ENCODE measurements at regions of chr18 and their contacts with region 1.

Region 1: DNA sequence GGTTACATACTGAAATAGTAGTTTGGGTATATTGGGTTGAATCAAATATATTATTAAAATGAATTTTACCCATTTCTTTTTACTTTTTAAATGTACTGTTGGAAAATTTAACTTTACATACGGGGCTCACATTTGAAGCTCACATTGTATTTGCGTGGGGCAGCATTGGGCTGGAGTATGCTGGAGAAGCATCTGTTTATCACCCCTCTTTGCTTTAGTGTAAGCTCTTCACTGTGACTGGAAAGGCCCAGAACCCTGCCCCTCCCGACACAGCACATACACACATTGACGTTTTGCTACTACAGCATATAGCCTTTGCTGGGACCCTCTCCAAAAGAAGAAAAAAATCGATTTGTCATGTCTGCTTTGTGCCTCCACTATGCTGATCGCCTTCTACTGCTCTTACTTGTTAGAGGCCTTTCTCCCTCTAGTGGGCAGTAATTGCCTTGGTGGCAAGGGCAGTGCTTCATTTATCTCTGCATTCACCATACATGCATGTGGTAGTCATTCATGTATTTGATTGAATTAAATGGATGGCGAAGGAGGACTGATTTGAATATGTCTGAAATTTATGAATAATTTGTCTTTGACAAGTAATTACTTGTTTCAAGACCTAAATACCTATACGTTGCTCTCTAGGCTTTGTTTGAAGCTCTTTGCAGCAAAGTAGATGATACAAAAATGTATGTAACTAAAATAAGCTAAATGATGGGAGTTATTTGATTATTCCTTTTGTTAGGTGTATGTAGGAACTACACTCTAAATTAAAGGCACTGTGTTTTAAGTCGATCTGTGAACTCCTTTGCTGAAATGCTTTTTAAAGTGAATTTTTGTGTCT is 37.4 kb downstream of the VAPA start:
- DNase-seq: peak; percentile 20 to 79 (median 45)
- ATAC-seq: peak; percentile 66
- H3K4me3 ChIP-seq: no peak overlapping the region
- H3K27ac ChIP-seq: peak overlapping the region; percentile 81
- H3K4me1 ChIP-seq: peaks cover 22 to 54% of the 10 kb centered on the region in 2 experiments; a peak in 4 of 5 replicates
- H3K27me3 ChIP-seq: no peaks in the 10 kb centered on the region
- CTCF ChIP-seq: peak; percentile 68 to 85 (median 80)
- EP300 ChIP-seq: no peak; the same call in 1 of the 2 replicates
- POLR2A ChIP-seq: no peak
- RAD21 ChIP-seq: peak; percentile 55 to 83

Region 2: GRCh38 chr18:9575558-9575957 is 375.7 kb before region 1 on chr18:
- CTCF ChIA-PET with region 1: no interaction called
- POLR2A ChIA-PET with region 1: interaction called, 4 read pairs
- in situ Hi-C with region 1: no loop called
- intact Hi-C with region 1: loop called (anchors 10 kb)
- DNase-seq: peak; percentile 70 to 98 (median 76)
- ATAC-seq: peak; percentile 98
- H3K4me3 ChIP-seq: no peak overlapping the region
- H3K27ac ChIP-seq: peak overlapping the region; percentile 16; the same call in 1 of the 3 replicates
- H3K4me1 ChIP-seq: peaks cover 0 to 6% of the 10 kb centered on the region in 2 experiments; a peak in 2 of 5 replicates
- H3K27me3 ChIP-seq: no peaks in the 10 kb centered on the region
- CTCF ChIP-seq: peak; percentile 87 to 99 (median 96)
- EP300 ChIP-seq: peak; percentile 48; the same call in 1 of the 2 replicates
- POLR2A ChIP-seq: no peak
- RAD21 ChIP-seq: peak; percentile 94 to 99

Region 3: GRCh38 chr18:9701609-9702349 is 249.5 kb before region 1 on chr18:
- CTCF ChIA-PET with region 1: no interaction called
- POLR2A ChIA-PET with region 1: interaction called, 4 read pairs
- in situ Hi-C with region 1: no loop called
- intact Hi-C with region 1: loop called (anchors 5 kb)
- DNase-seq: peak in 1 of 4 experiments; percentile 43
- ATAC-seq: no peak
- H3K4me3 ChIP-seq: no peak overlapping the region
- H3K27ac ChIP-seq: no peak overlapping the region
- H3K4me1 ChIP-seq: peaks cover 18 to 36% of the 10 kb centered on the region in 2 experiments; a peak in 4 of 5 replicates
- H3K27me3 ChIP-seq: no peaks in the 10 kb centered on the region
- CTCF ChIP-seq: no peak
- EP300 ChIP-seq: no peak
- POLR2A ChIP-seq: no peak
- RAD21 ChIP-seq: no peak

Region 4: DNA sequence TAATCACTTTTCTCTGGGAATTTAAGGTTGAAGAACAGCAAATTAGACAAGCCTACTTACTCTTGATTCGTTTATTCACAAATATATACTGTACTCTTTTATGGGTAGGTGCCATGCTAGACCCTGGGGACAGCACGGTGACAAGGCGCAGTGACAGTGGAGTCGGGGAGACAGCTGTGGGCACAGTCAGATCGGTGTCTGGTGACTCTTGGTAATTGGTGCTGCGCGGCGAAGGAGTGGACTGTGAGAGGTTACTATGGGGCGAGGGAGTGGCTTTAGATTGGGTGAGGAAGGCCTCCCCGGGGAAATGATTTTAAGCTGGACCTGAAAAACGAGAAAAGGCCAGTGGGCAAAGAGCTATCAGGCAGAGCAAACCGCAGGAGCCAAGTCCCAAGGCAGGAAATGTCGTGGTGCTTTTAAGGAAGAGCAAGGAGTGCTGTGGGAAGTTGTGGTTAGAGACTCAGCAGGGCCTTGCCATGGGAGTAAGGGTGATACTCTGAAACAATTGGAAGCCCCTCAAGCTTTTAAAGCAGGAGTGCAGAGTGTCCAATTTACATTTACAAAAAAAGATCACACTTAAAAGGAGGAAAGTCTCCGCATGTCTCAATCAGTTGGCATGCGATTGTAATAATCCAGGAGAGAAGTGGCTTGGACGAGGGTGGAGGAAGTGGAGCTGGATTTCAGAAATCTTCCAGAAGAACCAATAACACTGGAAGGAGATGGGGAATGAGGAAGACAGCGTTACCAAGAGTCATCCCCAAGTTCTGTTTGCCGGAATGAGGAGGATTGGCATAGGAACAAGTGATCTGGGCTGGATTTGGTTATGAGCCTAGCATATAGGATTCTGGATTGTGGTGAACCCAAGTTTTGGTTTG is 101.6 kb before region 1 on chr18:
- CTCF ChIA-PET with region 1: no interaction called
- POLR2A ChIA-PET with region 1: interaction called, 4 read pairs
- in situ Hi-C with region 1: no loop called
- intact Hi-C with region 1: loop called (anchors 5 kb)
- DNase-seq: peak; percentile 51 to 90 (median 69)
- ATAC-seq: peak; percentile 96
- H3K4me3 ChIP-seq: no peak overlapping the region
- H3K27ac ChIP-seq: peak overlapping the region; percentile 68
- H3K4me1 ChIP-seq: peaks cover 11 to 46% of the 10 kb centered on the region in 2 experiments
- H3K27me3 ChIP-seq: no peaks in the 10 kb centered on the region
- CTCF ChIP-seq: no peak
- EP300 ChIP-seq: no peak
- POLR2A ChIP-seq: 0 out of 2 replicates have a peak, but pooled peaks have one; percentile 41
- RAD21 ChIP-seq: peak in 1 of 2 experiments; percentile 31; a peak in 3 of 4 replicates

Region 5: DNA sequence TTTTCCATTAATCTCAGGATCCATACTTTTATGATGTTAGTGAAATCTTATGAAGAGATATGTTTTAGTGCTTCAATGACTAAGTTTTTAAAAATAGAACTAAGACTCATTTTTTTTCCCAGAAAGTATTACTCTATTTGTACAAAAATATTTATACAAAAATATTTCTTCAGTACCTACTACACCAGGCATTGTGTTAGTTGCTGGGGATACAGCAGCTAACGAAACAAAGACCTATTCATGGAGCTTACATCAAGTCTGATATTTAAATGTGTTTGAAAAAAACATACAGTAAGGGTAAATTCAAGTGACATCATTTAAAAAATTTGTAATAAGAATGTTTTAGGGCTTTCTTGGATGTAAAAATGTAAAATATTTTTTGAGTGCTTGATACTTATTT is 25.9 kb before region 1 on chr18:
- CTCF ChIA-PET with region 1: no interaction called
- POLR2A ChIA-PET with region 1: interaction called, 5 read pairs
- in situ Hi-C with region 1: no loop called
- intact Hi-C with region 1: loop called (anchors 2 kb)
- DNase-seq: no peak
- ATAC-seq: no peak
- H3K4me3 ChIP-seq: no peak overlapping the region
- H3K27ac ChIP-seq: peak overlapping the region; percentile 69; the same call in 2 of the 3 replicates
- H3K4me1 ChIP-seq: peaks cover 5 to 77% of the 10 kb centered on the region in 2 experiments
- H3K27me3 ChIP-seq: no peaks in the 10 kb centered on the region
- CTCF ChIP-seq: no peak
- EP300 ChIP-seq: no peak
- POLR2A ChIP-seq: no peak
- RAD21 ChIP-seq: no peak

Region 6: DNA sequence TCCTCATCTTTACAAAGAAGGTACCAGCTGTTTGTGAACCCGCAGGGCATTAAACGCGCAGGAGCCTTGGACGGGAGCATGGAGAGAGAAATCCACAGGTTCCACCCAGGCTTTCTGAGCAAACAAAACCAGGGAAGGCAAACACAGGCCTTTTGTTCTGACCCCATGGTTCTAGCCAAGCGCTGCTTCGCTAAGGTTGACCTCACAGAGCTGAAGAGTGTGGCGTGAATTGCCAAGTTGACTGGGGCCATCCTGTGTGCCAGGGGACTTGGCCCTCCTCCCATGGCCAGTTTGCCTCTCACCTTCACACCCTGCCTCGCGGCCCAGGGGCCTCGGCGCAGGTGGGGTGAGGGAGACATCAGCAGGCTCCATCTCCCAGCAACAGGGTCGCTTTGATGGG is 36.7 kb after region 1 on chr18:
- CTCF ChIA-PET with region 1: no interaction called
- POLR2A ChIA-PET with region 1: no interaction called
- in situ Hi-C with region 1: no loop called
- intact Hi-C with region 1: no loop called
- DNase-seq: no peak
- ATAC-seq: 0 out of 3 replicates have a peak, but pooled peaks have one; percentile 9
- H3K4me3 ChIP-seq: no peak overlapping the region
- H3K27ac ChIP-seq: no peak overlapping the region
- H3K4me1 ChIP-seq: peaks cover 6% of the 10 kb centered on the region in 2 experiments; a peak in 3 of 5 replicates
- H3K27me3 ChIP-seq: peaks cover 64 to 71% of the 10 kb centered on the region in 2 experiments
- CTCF ChIP-seq: no peak
- EP300 ChIP-seq: no peak
- POLR2A ChIP-seq: no peak
- RAD21 ChIP-seq: no peak

Region 7: GRCh38 chr18:10057894-10058791 is 106.9 kb after region 1 on chr18:
- CTCF ChIA-PET with region 1: no interaction called
- POLR2A ChIA-PET with region 1: no interaction called
- in situ Hi-C with region 1: no loop called
- intact Hi-C with region 1: no loop called
- DNase-seq: no peak
- ATAC-seq: no peak
- H3K4me3 ChIP-seq: no peak overlapping the region
- H3K27ac ChIP-seq: no peak overlapping the region
- H3K4me1 ChIP-seq: 0 out of 5 replicates have a peak, but pooled peaks cover 0 to 4% of the 10 kb centered on the region in 2 experiments
- H3K27me3 ChIP-seq: peaks cover 55 to 69% of the 10 kb centered on the region in 2 experiments
- CTCF ChIP-seq: no peak
- EP300 ChIP-seq: no peak
- POLR2A ChIP-seq: no peak
- RAD21 ChIP-seq: no peak

Region 8: GRCh38 chr18:10100941-10101701 is 149.9 kb after region 1 on chr18:
- CTCF ChIA-PET with region 1: no interaction called
- POLR2A ChIA-PET with region 1: no interaction called
- in situ Hi-C with region 1: no loop called
- intact Hi-C with region 1: no loop called
- DNase-seq: no peak
- ATAC-seq: no peak
- H3K4me3 ChIP-seq: no peak overlapping the region
- H3K27ac ChIP-seq: no peak overlapping the region
- H3K4me1 ChIP-seq: no peaks in the 10 kb centered on the region
- H3K27me3 ChIP-seq: peaks cover 13 to 29% of the 10 kb centered on the region in 2 experiments; a peak in 3 of 5 replicates
- CTCF ChIP-seq: no peak
- EP300 ChIP-seq: no peak
- POLR2A ChIP-seq: no peak
- RAD21 ChIP-seq: no peak